ENCODE measurements at regions of chr7 and their contacts with region 1.

Region 1: GRCh38 chr7:28272461-28272877 is 91.9 kb upstream of the JAZF1 start:
- DNase-seq: peak; percentile 46 to 75 (median 55)
- H3K4me3 ChIP-seq: no peak overlapping the region
- H3K27ac ChIP-seq: no peak overlapping the region
- H3K4me1 ChIP-seq: peaks cover 0 to 4% of the 10 kb centered on the region in 2 donors
- H3K27me3 ChIP-seq: no peaks in the 10 kb centered on the region
- CTCF ChIP-seq: peak; percentile 37 to 65 (median 52)
- POLR2A ChIP-seq: no peak

Region 2: DNA sequence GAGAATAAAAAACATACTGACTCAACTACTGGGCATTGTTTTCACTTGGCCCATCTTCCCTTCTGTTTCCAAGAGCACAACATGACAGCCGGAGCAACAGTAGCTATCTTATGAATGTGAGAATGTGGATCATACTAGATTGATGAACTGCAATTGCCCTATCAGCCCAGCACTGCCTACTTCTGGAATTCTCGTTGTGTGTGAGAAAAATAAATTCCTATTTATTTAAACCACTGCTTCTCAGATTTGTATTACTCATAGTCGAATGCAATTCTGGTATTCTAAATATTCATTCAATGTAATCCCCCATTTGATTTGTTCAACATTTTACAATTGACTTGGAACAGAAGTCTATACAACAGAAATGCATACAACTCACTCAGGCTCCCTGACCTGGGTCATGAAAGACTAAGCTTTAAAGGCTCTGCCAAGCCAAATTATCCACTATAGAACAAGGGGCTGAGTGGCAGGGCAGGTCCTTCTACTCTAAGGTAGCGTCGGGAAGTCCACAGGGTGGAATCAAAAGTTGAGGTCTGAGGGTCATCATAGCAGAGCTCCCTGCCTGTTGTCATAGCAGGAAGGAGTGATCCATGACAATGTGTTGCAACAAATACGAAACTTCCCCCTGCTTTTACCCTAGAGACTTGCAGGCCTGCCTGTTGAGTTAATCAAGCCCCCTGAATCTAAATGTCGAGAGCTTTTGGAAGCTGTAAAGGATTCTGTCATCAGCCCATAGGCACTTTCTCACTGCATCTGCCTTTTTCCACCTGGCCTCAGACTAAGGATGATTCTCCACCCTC is 79.5 kb before region 1 on chr7:
- intact Hi-C with region 1: loop called in 1 of 2 experiments (anchors 5 kb)
- DNase-seq: no peak
- H3K4me3 ChIP-seq: no peak overlapping the region
- H3K27ac ChIP-seq: no peak overlapping the region
- H3K4me1 ChIP-seq: peaks cover 0 to 10% of the 10 kb centered on the region in 2 donors
- H3K27me3 ChIP-seq: no peaks in the 10 kb centered on the region
- CTCF ChIP-seq: no peak
- POLR2A ChIP-seq: no peak